ENCODE measurements at regions of chr19 and their contacts with region 1.

Region 1: GRCh38 chr19:10189616-10190015 is 5.1 kb downstream of the DNMT1 start:
- DNase-seq: no peak
- ATAC-seq: no peak
- H3K4me3 ChIP-seq: no peak overlapping the region
- H3K27ac ChIP-seq: no peak overlapping the region
- H3K4me1 ChIP-seq: peaks cover 0 to 24% (median 5%) of the 10 kb centered on the region in 4 donors
- H3K27me3 ChIP-seq: no peaks in the 10 kb centered on the region
- CTCF ChIP-seq: no peak
- POLR2A ChIP-seq: no peak

Region 2: GRCh38 chr19:10061717-10062310 is 127.8 kb before region 1 on chr19:
- intact Hi-C with region 1: no loop called
- DNase-seq: no peak
- ATAC-seq: peak in 1 of 4 donors; percentile 27
- H3K4me3 ChIP-seq: no peak overlapping the region
- H3K27ac ChIP-seq: no peak overlapping the region
- H3K4me1 ChIP-seq: peaks cover 0 to 5% (median 0%) of the 10 kb centered on the region in 4 donors
- H3K27me3 ChIP-seq: no peaks in the 10 kb centered on the region
- CTCF ChIP-seq: no peak
- POLR2A ChIP-seq: no peak

Region 3: GRCh38 chr19:10251792-10252694 is 62.4 kb after region 1 on chr19 and contains the start of gene MRPL4:
- intact Hi-C with region 1: loop called in 1 of 2 experiments (anchors 10 kb)
- DNase-seq: peak; percentile 92 to 98 (median 96)
- ATAC-seq: peak; percentile 89 to 95 (median 92)
- H3K4me3 ChIP-seq: peak within 1 kb of the TSS; percentile 84 to 99 (median 96)
- H3K27ac ChIP-seq: peak within 1 kb of the TSS; percentile 31 to 90 (median 65)
- H3K4me1 ChIP-seq: no peaks in the 10 kb centered on the region
- H3K27me3 ChIP-seq: no peaks in the 10 kb centered on the region
- CTCF ChIP-seq: no peak
- POLR2A ChIP-seq: peak; percentile 59
- total RNA-seq, gene MRPL4: 33.7 to 109 (median 38.2) TPM

Measured in right lobe of liver (tissue), 6 donors.